CD8-positive, alpha-beta T cell (primary cell): ENCODE measurements at regions of chr1 and their contacts with region 1.

Region 1: GRCh38 chr1:84944767-84945486 is 51.9 kb upstream of the LPAR3 start:
- DNase-seq: peak; percentile 22 to 97 (median 73)
- ATAC-seq: peak; percentile 91
- H3K4me3 ChIP-seq: peak overlapping the region; percentile 54 to 75
- H3K4me3 Mint-ChIP-seq: peak overlapping the region; percentile 89
- H3K27ac ChIP-seq: peak overlapping the region; percentile 82 to 85
- H3K27ac Mint-ChIP-seq: peak overlapping the region; percentile 98
- H3K4me1 ChIP-seq: peaks cover 4% of the 10 kb centered on the region
- H3K4me1 Mint-ChIP-seq: peaks cover 16% of the 10 kb centered on the region
- H3K27me3 ChIP-seq: no peaks in the 10 kb centered on the region
- H3K27me3 Mint-ChIP-seq: no peaks in the 10 kb centered on the region
- CTCF ChIP-seq: peak; percentile 98

Region 2: DNA sequence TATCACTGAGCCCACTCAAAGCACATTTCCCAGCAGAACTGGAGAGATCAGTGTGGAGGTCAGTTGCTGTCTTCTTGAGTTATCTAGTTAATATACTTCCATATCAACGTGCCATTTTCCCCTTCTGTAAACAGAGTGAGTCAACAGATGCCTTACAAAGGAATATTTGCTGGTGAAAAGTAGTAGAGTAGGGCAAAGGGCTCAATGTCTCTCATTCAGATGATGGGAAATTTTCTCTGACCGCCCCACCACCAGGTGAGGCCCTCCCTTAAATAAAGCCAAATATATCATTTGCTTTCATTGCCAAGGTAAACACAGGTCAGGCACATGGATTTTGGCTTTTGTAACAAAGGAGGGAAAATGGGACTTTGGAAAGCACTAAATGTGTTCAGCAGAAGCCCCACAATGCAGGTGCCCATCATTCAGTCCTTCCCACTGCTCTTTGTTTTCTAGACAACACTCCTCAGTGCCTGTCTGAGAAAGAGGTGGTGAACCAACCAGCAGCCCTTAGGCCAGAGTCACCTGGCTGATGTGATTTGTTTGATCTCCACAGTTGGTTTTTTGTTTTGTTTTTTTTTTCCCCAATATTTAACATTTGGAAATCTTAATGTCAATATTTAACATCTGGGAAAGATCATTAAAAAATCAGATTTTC is 683.9 kb before region 1 on chr1:
- CTCF ChIA-PET with region 1: no interaction called
- POLR2A ChIA-PET with region 1: no interaction called
- intact Hi-C with region 1: no loop called
- DNase-seq: no peak
- ATAC-seq: no peak
- H3K4me3 ChIP-seq: no peak overlapping the region
- H3K4me3 Mint-ChIP-seq: no peak overlapping the region
- H3K27ac ChIP-seq: no peak overlapping the region
- H3K27ac Mint-ChIP-seq: no peak overlapping the region
- H3K4me1 ChIP-seq: no peaks in the 10 kb centered on the region
- H3K4me1 Mint-ChIP-seq: no peaks in the 10 kb centered on the region
- H3K27me3 ChIP-seq: no peaks in the 10 kb centered on the region
- H3K27me3 Mint-ChIP-seq: no peaks in the 10 kb centered on the region
- CTCF ChIP-seq: no peak

Region 3: GRCh38 chr1:84573967-84574842 is 370.7 kb before region 1 on chr1 and contains the start of gene CTBS:
- CTCF ChIA-PET with region 1: no interaction called
- POLR2A ChIA-PET with region 1: no interaction called
- intact Hi-C with region 1: loop called in 1 of 2 experiments (anchors 5 kb)
- DNase-seq: peak; percentile 67 to 93 (median 85)
- ATAC-seq: peak; percentile 91
- H3K4me3 ChIP-seq: peak within 1 kb of the TSS; percentile 81 to 92
- H3K4me3 Mint-ChIP-seq: peak within 1 kb of the TSS; percentile 96
- H3K27ac ChIP-seq: peak within 1 kb of the TSS; percentile 94 to 96
- H3K27ac Mint-ChIP-seq: peak within 1 kb of the TSS; percentile 99
- H3K4me1 ChIP-seq: peaks cover 20% of the 10 kb centered on the region
- H3K4me1 Mint-ChIP-seq: peaks cover 42% of the 10 kb centered on the region
- H3K27me3 ChIP-seq: no peaks in the 10 kb centered on the region
- H3K27me3 Mint-ChIP-seq: no peaks in the 10 kb centered on the region
- CTCF ChIP-seq: no peak
- total RNA-seq, gene CTBS: 17.3 to 19.7 TPM

Region 4: GRCh38 chr1:85027242-85027983 is 82.5 kb after region 1 on chr1:
- CTCF ChIA-PET with region 1: interaction called, 123 read pairs
- POLR2A ChIA-PET with region 1: interaction called, 30 read pairs
- intact Hi-C with region 1: loop called (anchors 1 kb)
- DNase-seq: peak in 6 of 9 experiments; percentile 21 to 80 (median 52)
- ATAC-seq: peak; percentile 92
- H3K4me3 ChIP-seq: peak overlapping the region; percentile 10 to 42
- H3K4me3 Mint-ChIP-seq: peak overlapping the region; percentile 74
- H3K27ac ChIP-seq: peak overlapping the region in 1 of 2 experiments; percentile 60
- H3K27ac Mint-ChIP-seq: peak overlapping the region; percentile 86
- H3K4me1 ChIP-seq: peaks cover 8% of the 10 kb centered on the region
- H3K4me1 Mint-ChIP-seq: peaks cover 10% of the 10 kb centered on the region
- H3K27me3 ChIP-seq: no peaks in the 10 kb centered on the region
- H3K27me3 Mint-ChIP-seq: no peaks in the 10 kb centered on the region
- CTCF ChIP-seq: peak; percentile 30

Region 5: GRCh38 chr1:85061711-85062424 is 116.9 kb after region 1 on chr1:
- CTCF ChIA-PET with region 1: interaction called, 3 read pairs
- POLR2A ChIA-PET with region 1: interaction called, 3 read pairs
- intact Hi-C with region 1: loop called in 1 of 2 experiments (anchors 1 kb)
- DNase-seq: peak; percentile 64 to 96 (median 81)
- ATAC-seq: peak; percentile 99
- H3K4me3 ChIP-seq: peak overlapping the region; percentile 38 to 49
- H3K4me3 Mint-ChIP-seq: peak overlapping the region; percentile 84
- H3K27ac ChIP-seq: peak overlapping the region in 1 of 2 experiments; percentile 29
- H3K27ac Mint-ChIP-seq: peak overlapping the region; percentile 72
- H3K4me1 ChIP-seq: peaks cover 4% of the 10 kb centered on the region
- H3K4me1 Mint-ChIP-seq: peaks cover 14% of the 10 kb centered on the region
- H3K27me3 ChIP-seq: no peaks in the 10 kb centered on the region
- H3K27me3 Mint-ChIP-seq: peaks cover 12% of the 10 kb centered on the region
- CTCF ChIP-seq: no peak

Region 6: DNA sequence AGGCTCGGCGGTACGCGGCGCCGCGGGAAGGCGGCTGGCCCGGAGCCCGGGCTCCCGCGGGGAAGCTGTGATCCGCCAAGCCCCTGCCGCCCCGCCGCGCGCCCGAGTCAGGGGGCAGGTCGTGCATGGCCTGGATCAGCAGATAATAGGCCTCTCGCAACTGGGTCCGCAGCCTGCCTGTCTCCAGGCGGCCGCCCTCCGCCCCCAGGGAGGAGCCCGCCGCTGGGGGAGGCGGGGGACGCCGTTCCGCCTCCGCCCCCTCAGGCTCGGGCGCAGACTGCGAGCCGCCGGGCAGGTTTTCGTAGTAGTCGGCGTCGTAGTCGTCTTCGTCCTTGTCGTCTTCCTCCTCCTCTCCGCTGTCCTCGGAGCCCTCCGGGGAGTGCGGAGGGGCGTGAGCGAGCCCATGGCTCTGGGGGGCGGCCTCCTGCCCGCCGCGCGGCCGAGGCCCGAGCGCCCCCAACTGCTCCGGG is 256.0 kb after region 1 on chr1 and contains the start of gene SYDE2:
- CTCF ChIA-PET with region 1: interaction called, 3 read pairs
- POLR2A ChIA-PET with region 1: interaction called, 3 read pairs
- intact Hi-C with region 1: loop called in 1 of 2 experiments (anchors 1 kb)
- DNase-seq: peak; percentile 70 to 91 (median 79)
- ATAC-seq: peak; percentile 83
- H3K4me3 ChIP-seq: peak within 1 kb of the TSS; percentile 68 to 94
- H3K4me3 Mint-ChIP-seq: peak within 1 kb of the TSS; percentile 100
- H3K27ac ChIP-seq: peak within 1 kb of the TSS; percentile 63 to 94
- H3K27ac Mint-ChIP-seq: peak within 1 kb of the TSS; percentile 100
- H3K4me1 ChIP-seq: peaks cover 27% of the 10 kb centered on the region
- H3K4me1 Mint-ChIP-seq: peaks cover 48% of the 10 kb centered on the region
- H3K27me3 ChIP-seq: peaks cover 0 to 5% of the 10 kb centered on the region in 2 experiments
- H3K27me3 Mint-ChIP-seq: peaks cover 4% of the 10 kb centered on the region
- CTCF ChIP-seq: no peak
- total RNA-seq, gene SYDE2: 6.2 to 6.4 TPM

Region 7: GRCh38 chr1:85259118-85259911 is 314.4 kb after region 1 on chr1 and contains the start of gene C1orf52:
- CTCF ChIA-PET with region 1: interaction called, 181 read pairs
- POLR2A ChIA-PET with region 1: interaction called, 9 read pairs
- intact Hi-C with region 1: loop called (anchors 1 kb)
- DNase-seq: peak; percentile 86 to 99 (median 98)
- ATAC-seq: peak; percentile 96
- H3K4me3 ChIP-seq: peak within 1 kb of the TSS; percentile 65 to 93
- H3K4me3 Mint-ChIP-seq: peak within 1 kb of the TSS; percentile 97
- H3K27ac ChIP-seq: peak within 1 kb of the TSS; percentile 78 to 88
- H3K27ac Mint-ChIP-seq: peak within 1 kb of the TSS; percentile 95
- H3K4me1 ChIP-seq: peaks cover 24% of the 10 kb centered on the region
- H3K4me1 Mint-ChIP-seq: peaks cover 36% of the 10 kb centered on the region
- H3K27me3 ChIP-seq: no peaks in the 10 kb centered on the region
- H3K27me3 Mint-ChIP-seq: no peaks in the 10 kb centered on the region
- CTCF ChIP-seq: peak; percentile 99
- total RNA-seq, gene C1orf52: 70.7 to 74.4 TPM

Region 8: GRCh38 chr1:85707990-85708828 is 763.3 kb after region 1 on chr1 and contains the start of gene ZNHIT6:
- CTCF ChIA-PET with region 1: no interaction called
- POLR2A ChIA-PET with region 1: no interaction called
- intact Hi-C with region 1: loop called (anchors 5 kb)
- DNase-seq: peak; percentile 72 to 95 (median 84)
- ATAC-seq: peak; percentile 95
- H3K4me3 ChIP-seq: peak within 1 kb of the TSS; percentile 89 to 93
- H3K4me3 Mint-ChIP-seq: no peak within 1 kb of the TSS
- H3K27ac ChIP-seq: peak within 1 kb of the TSS; percentile 67 to 79
- H3K27ac Mint-ChIP-seq: no peak within 1 kb of the TSS
- H3K4me1 ChIP-seq: peaks cover 17% of the 10 kb centered on the region
- H3K4me1 Mint-ChIP-seq: peaks cover 30% of the 10 kb centered on the region
- H3K27me3 ChIP-seq: no peaks in the 10 kb centered on the region
- H3K27me3 Mint-ChIP-seq: no peaks in the 10 kb centered on the region
- CTCF ChIP-seq: no peak
- total RNA-seq, gene ZNHIT6: 14.4 to 15.3 TPM